ENCODE measurements at regions of chr11 and their contacts with region 1.

Region 1: DNA sequence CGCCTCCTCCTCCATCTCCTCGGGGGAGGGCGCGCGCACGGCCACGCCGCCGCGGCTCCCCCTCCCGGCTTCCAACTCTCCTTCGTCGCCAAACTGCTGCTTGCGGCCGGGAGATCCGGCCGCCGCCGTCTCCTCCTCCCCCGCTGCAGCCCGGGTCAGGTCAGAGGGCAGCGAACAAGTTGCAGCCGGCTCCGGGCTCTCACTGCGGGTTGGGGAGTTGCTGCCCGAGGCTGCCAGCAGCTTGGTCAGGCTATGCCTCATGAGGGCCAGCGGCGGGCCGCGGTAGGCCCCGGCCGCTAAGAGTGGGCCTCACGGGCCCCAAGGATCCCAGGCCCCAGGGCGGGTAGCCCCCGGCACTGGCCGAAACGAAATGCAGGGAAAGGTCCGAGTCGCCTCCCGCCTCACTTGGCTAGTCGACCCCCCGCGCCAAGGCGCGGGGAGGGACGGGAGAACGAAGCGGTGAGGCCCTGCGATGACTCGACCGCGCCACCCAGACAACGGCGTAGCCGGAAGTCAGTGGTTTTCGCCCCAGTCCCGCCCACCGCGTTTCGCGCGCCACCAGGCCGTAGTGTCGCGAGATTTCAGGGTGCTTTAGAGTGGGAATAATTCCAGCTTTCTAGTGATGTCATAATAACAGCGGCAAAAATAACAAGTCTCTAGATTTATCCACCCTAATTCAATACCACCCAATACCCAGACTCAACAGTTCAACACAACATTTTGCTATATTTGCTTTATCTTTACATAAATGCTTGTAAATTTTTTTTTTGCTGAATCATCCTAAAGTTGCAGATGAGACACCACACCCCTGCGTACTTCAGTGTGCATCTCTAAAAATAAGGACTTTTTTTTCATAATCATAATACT is at the start of gene CREBZF:
- DNase-seq: peak; percentile 86 to 95 (median 90)
- H3K4me3 ChIP-seq: peak within 1 kb of the TSS; percentile 92
- H3K4me3 Mint-ChIP-seq: peak within 1 kb of the TSS; percentile 97 to 100 (median 99)
- H3K27ac ChIP-seq: peak within 1 kb of the TSS; percentile 98
- H3K27ac Mint-ChIP-seq: peak within 1 kb of the TSS; percentile 97 to 100 (median 100)
- H3K4me1 ChIP-seq: peaks cover 37% of the 10 kb centered on the region
- H3K4me1 Mint-ChIP-seq: peaks cover 40 to 50% (median 49%) of the 10 kb centered on the region in 3 donors
- H3K27me3 ChIP-seq: no peaks in the 10 kb centered on the region
- H3K27me3 Mint-ChIP-seq: peaks cover 2 to 3% of the 10 kb centered on the region in 2 donors
- total RNA-seq, gene CREBZF: 45.0 to 45.1 TPM

Region 2: GRCh38 chr11:85647604-85648299 is 17.1 kb before region 1 on chr11 and contains the start of gene TMEM126A:
- CTCF ChIA-PET with region 1: interaction called, 8 read pairs
- POLR2A ChIA-PET with region 1: interaction called, 73 read pairs
- DNase-seq: peak; percentile 83 to 92 (median 87)
- H3K4me3 ChIP-seq: peak within 1 kb of the TSS; percentile 81
- H3K4me3 Mint-ChIP-seq: peak within 1 kb of the TSS; percentile 86 to 97 (median 96)
- H3K27ac ChIP-seq: peak within 1 kb of the TSS; percentile 77
- H3K27ac Mint-ChIP-seq: peak within 1 kb of the TSS; percentile 87 to 99 (median 98)
- H3K4me1 ChIP-seq: peaks cover 21% of the 10 kb centered on the region
- H3K4me1 Mint-ChIP-seq: peaks cover 23 to 43% (median 41%) of the 10 kb centered on the region in 3 donors
- H3K27me3 ChIP-seq: no peaks in the 10 kb centered on the region
- H3K27me3 Mint-ChIP-seq: peaks cover 8 to 25% of the 10 kb centered on the region in 2 donors
- total RNA-seq, gene TMEM126A: 70.0 to 73.0 TPM

Region 3: GRCh38 chr11:85787809-85788805 is 123.3 kb after region 1 on chr11:
- CTCF ChIA-PET with region 1: no interaction called
- POLR2A ChIA-PET with region 1: no interaction called
- DNase-seq: no peak
- H3K4me3 ChIP-seq: no peak overlapping the region
- H3K4me3 Mint-ChIP-seq: peak overlapping the region in 3 of 7 donors; percentile 19 to 37 (median 36)
- H3K27ac ChIP-seq: no peak overlapping the region
- H3K27ac Mint-ChIP-seq: peak overlapping the region in 6 of 8 donors; percentile 3 to 85 (median 78)
- H3K4me1 ChIP-seq: peaks cover 9% of the 10 kb centered on the region
- H3K4me1 Mint-ChIP-seq: peaks cover 44 to 68% (median 64%) of the 10 kb centered on the region in 3 donors
- H3K27me3 ChIP-seq: no peaks in the 10 kb centered on the region
- H3K27me3 Mint-ChIP-seq: no peaks in the 10 kb centered on the region

Region 4: GRCh38 chr11:85988780-85989179 is 323.9 kb after region 1 on chr11:
- CTCF ChIA-PET with region 1: no interaction called
- POLR2A ChIA-PET with region 1: no interaction called
- DNase-seq: no peak
- H3K4me3 ChIP-seq: no peak overlapping the region
- H3K4me3 Mint-ChIP-seq: peak overlapping the region in 1 of 7 donors; percentile 45
- H3K27ac ChIP-seq: no peak overlapping the region
- H3K27ac Mint-ChIP-seq: peak overlapping the region in 6 of 8 donors; percentile 23 to 97 (median 59)
- H3K4me1 ChIP-seq: no peaks in the 10 kb centered on the region
- H3K4me1 Mint-ChIP-seq: peaks cover 42 to 56% (median 55%) of the 10 kb centered on the region in 3 donors
- H3K27me3 ChIP-seq: no peaks in the 10 kb centered on the region
- H3K27me3 Mint-ChIP-seq: no peaks in the 10 kb centered on the region